SK-N-SH (cell line): ENCODE measurements at regions of chr6 and their contacts with region 1.

Region 1: DNA sequence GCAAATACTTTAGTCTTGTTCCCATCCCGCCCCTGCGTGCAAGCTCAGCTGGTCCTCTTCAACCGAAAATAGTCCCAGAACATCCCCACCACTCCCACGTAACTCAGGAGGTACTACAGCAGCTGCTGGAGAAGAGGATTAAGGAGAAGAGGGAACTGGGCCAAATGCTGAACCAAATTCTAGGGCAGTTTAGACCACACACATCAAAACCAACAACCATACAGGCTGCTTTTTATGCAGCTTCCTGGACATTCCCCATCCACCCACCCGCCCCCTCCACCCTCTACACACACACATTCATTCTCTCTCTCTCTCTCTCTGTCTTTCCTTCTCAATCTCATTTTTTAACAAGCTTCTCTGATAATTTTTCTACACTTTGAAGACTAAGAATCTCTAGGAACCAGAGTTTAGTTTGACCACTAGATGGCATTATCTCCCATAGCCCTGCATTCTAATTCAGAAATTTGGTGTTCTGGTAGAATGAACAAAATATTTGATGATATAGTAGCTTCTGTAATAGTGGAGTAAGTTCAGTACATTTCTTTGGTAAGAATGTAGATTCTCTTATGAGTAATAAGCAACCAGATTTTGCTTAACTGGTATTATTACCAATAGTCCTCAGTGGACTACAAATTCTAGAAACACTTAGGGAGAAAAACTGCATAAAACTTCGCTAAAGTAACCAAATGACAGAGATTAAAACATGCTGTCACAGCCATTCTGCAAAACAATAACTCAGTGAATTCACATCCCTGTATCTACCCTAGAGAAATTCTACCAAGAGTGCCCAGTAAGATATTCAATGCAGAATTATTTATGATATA is 52.1 kb upstream of the BEND6 start:
- DNase-seq: peak; percentile 51
- H3K4me3 ChIP-seq: no peak overlapping the region; a peak in 1 of 4 replicates
- H3K27ac ChIP-seq: peak overlapping the region in 1 of 2 experiments; percentile 36; a peak in 2 of 4 replicates
- H3K4me1 ChIP-seq: peaks cover 0 to 23% of the 10 kb centered on the region in 2 experiments; a peak in 3 of 4 replicates
- H3K27me3 ChIP-seq: no peaks in the 10 kb centered on the region
- CTCF ChIP-seq: peak; percentile 88
- EP300 ChIP-seq: no peak
- RAD21 ChIP-seq: peak; percentile 79

Region 2: GRCh38 chr6:56831334-56831733 is 71.5 kb before region 1 on chr6:
- CTCF ChIA-PET with region 1: no interaction called
- POLR2A ChIA-PET with region 1: no interaction called
- DNase-seq: no peak
- H3K4me3 ChIP-seq: no peak overlapping the region
- H3K27ac ChIP-seq: no peak overlapping the region
- H3K4me1 ChIP-seq: peaks cover 2 to 12% of the 10 kb centered on the region in 2 experiments; a peak in 3 of 4 replicates
- H3K27me3 ChIP-seq: no peaks in the 10 kb centered on the region
- CTCF ChIP-seq: no peak
- EP300 ChIP-seq: no peak
- RAD21 ChIP-seq: no peak

Region 3: GRCh38 chr6:56843024-56843572 is 59.8 kb before region 1 on chr6:
- CTCF ChIA-PET with region 1: no interaction called
- POLR2A ChIA-PET with region 1: no interaction called
- DNase-seq: no peak
- H3K4me3 ChIP-seq: peak overlapping the region; percentile 80 to 95
- H3K27ac ChIP-seq: peak overlapping the region; percentile 82 to 92
- H3K4me1 ChIP-seq: peaks cover 17 to 23% of the 10 kb centered on the region in 2 experiments; a peak in 3 of 4 replicates
- H3K27me3 ChIP-seq: no peaks in the 10 kb centered on the region
- CTCF ChIP-seq: no peak
- EP300 ChIP-seq: no peak
- RAD21 ChIP-seq: no peak

Region 4: DNA sequence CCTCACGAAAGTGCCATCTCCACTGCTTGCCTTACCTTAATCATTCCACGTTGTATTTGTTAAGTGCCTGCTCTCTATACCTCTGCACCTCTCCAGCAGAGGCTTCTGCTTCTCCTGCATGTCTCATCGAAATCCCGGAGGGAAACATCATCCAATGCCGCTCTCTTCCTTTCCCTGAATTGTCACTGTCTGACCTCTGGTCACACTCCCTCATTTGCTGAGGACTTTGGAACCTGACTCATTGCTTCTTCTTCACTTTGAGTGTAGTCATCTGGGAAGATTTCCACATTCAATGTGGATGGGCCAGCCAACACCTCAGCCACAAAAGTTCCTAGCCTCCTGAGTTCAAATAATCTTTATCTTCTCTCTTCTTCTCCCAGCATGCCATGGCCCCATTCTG is 26.9 kb before region 1 on chr6:
- CTCF ChIA-PET with region 1: interaction called, 16 read pairs
- POLR2A ChIA-PET with region 1: no interaction called
- DNase-seq: no peak
- H3K4me3 ChIP-seq: no peak overlapping the region
- H3K27ac ChIP-seq: no peak overlapping the region
- H3K4me1 ChIP-seq: no peaks in the 10 kb centered on the region
- H3K27me3 ChIP-seq: no peaks in the 10 kb centered on the region
- CTCF ChIP-seq: no peak
- EP300 ChIP-seq: no peak
- RAD21 ChIP-seq: no peak

Region 5: GRCh38 chr6:56923565-56923964 is 20.7 kb after region 1 on chr6:
- CTCF ChIA-PET with region 1: interaction called, 12 read pairs
- POLR2A ChIA-PET with region 1: no interaction called
- DNase-seq: no peak
- H3K4me3 ChIP-seq: no peak overlapping the region
- H3K27ac ChIP-seq: no peak overlapping the region
- H3K4me1 ChIP-seq: peaks cover 17 to 26% of the 10 kb centered on the region in 2 experiments; a peak in 3 of 4 replicates
- H3K27me3 ChIP-seq: no peaks in the 10 kb centered on the region
- CTCF ChIP-seq: no peak
- EP300 ChIP-seq: no peak
- RAD21 ChIP-seq: no peak

Region 6: GRCh38 chr6:56955171-56956045 is 52.6 kb after region 1 on chr6:
- CTCF ChIA-PET with region 1: interaction called, 76 read pairs
- POLR2A ChIA-PET with region 1: no interaction called
- DNase-seq: peak; percentile 67
- H3K4me3 ChIP-seq: peak overlapping the region; percentile 76 to 92
- H3K27ac ChIP-seq: peak overlapping the region; percentile 76 to 84
- H3K4me1 ChIP-seq: peaks cover 7 to 49% of the 10 kb centered on the region in 2 experiments
- H3K27me3 ChIP-seq: no peaks in the 10 kb centered on the region
- CTCF ChIP-seq: peak; percentile 87
- EP300 ChIP-seq: peak in 1 of 2 experiments; percentile 68; a peak in 1 of 4 replicates
- RAD21 ChIP-seq: peak; percentile 55

Region 7: GRCh38 chr6:56984361-56984760 is 81.5 kb after region 1 on chr6:
- CTCF ChIA-PET with region 1: interaction called, 14 read pairs
- POLR2A ChIA-PET with region 1: no interaction called
- DNase-seq: no peak
- H3K4me3 ChIP-seq: no peak overlapping the region
- H3K27ac ChIP-seq: no peak overlapping the region
- H3K4me1 ChIP-seq: no peaks in the 10 kb centered on the region
- H3K27me3 ChIP-seq: no peaks in the 10 kb centered on the region
- CTCF ChIP-seq: no peak
- EP300 ChIP-seq: no peak
- RAD21 ChIP-seq: no peak

Region 8: GRCh38 chr6:57021086-57021720 is 118.3 kb after region 1 on chr6:
- CTCF ChIA-PET with region 1: interaction called, 104 read pairs
- POLR2A ChIA-PET with region 1: no interaction called
- DNase-seq: peak; percentile 57
- H3K4me3 ChIP-seq: no peak overlapping the region
- H3K27ac ChIP-seq: no peak overlapping the region
- H3K4me1 ChIP-seq: no peaks in the 10 kb centered on the region
- H3K27me3 ChIP-seq: no peaks in the 10 kb centered on the region
- CTCF ChIP-seq: peak; percentile 71
- EP300 ChIP-seq: no peak
- RAD21 ChIP-seq: peak; percentile 65

Region 9: DNA sequence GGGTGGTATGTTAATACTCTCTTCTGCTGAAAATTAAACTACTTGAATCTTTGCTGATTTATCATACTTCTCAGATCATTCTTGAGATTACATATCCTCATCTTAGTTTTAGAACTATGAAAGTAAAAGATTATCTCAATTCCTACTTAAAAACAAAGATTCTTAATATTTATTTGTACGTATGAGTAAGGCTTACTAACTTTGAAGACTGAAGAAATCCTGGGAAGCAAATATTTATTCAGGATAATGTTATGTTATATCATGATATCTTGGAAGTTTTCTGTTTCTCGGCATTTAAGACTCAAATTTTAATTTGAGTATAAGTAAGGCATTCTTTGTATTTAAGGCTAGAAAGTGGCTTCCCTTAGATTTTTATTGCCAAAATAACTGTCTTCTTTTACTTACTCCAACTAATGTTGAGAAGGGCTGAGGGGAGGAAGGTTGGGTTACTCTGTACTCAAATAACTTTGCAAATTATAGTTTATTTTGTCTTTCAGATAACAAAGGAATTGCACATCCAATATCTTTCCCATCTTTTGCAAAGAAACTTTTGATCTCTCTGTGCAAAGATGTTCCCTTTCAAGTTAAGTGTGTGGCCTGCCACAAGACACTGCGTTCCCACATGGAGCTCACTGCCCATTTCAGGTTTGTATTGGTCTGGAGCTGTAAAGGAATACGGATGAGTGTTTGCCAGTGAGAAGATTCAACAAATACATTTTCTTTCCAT is 238.8 kb after region 1 on chr6:
- CTCF ChIA-PET with region 1: no interaction called
- POLR2A ChIA-PET with region 1: no interaction called
- DNase-seq: no peak
- H3K4me3 ChIP-seq: no peak overlapping the region
- H3K27ac ChIP-seq: no peak overlapping the region
- H3K4me1 ChIP-seq: no peaks in the 10 kb centered on the region
- H3K27me3 ChIP-seq: no peaks in the 10 kb centered on the region
- CTCF ChIP-seq: no peak
- EP300 ChIP-seq: no peak
- RAD21 ChIP-seq: no peak

Region 10: DNA sequence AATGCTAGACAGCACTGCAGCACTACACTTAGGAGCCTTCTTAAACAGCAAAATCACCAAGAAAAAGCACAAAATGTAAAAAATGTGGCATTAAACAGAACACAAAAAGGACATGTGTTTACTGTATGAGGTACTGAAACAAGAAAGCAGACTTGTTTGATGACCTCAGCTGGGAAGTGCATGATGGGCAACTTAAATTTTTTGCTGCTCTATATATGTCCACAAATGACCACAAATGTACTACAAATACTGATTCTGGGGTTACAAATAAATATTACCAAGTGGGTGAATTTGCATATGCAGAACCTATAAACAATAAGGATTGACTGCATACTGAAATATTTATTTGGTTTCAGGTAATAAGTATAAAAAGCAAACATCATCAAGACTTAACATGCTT is 306.2 kb after region 1 on chr6:
- CTCF ChIA-PET with region 1: no interaction called
- POLR2A ChIA-PET with region 1: no interaction called
- DNase-seq: no peak
- H3K4me3 ChIP-seq: no peak overlapping the region
- H3K27ac ChIP-seq: no peak overlapping the region
- H3K4me1 ChIP-seq: peaks cover 0 to 4% of the 10 kb centered on the region in 2 experiments; a peak in 1 of 4 replicates
- H3K27me3 ChIP-seq: no peaks in the 10 kb centered on the region
- CTCF ChIP-seq: no peak
- EP300 ChIP-seq: no peak
- RAD21 ChIP-seq: no peak